ENCODE measurements at regions of chr12 and their contacts with region 1.

Region 1: GRCh38 chr12:6540181-6540877 is 6.0 kb downstream of the GAPDH start:
- DNase-seq: no peak
- ATAC-seq: peak; percentile 60
- H3K4me3 ChIP-seq: peak overlapping the region; percentile 28
- H3K27ac ChIP-seq: peak overlapping the region; percentile 42
- H3K4me1 ChIP-seq: peaks cover 26% of the 10 kb centered on the region
- H3K27me3 ChIP-seq: no peaks in the 10 kb centered on the region
- CTCF ChIP-seq: peak in 1 of 3 experiments; percentile 35; a peak in 1 of 6 replicates
- EP300 ChIP-seq: no peak
- POLR2A ChIP-seq: no peak
- RAD21 ChIP-seq: no peak

Region 2: GRCh38 chr12:5945071-5946008 is 595.0 kb before region 1 on chr12 and contains the start of gene ANO2:
- CTCF ChIA-PET with region 1: no interaction called
- POLR2A ChIA-PET with region 1: no interaction called
- RAD21 ChIA-PET with region 1: no interaction called
- SMC1A ChIA-PET with region 1: no interaction called
- in situ Hi-C with region 1: no loop called
- intact Hi-C with region 1: no loop called
- DNase-seq: no peak
- ATAC-seq: no peak
- H3K4me3 ChIP-seq: no peak within 1 kb of the TSS
- H3K27ac ChIP-seq: no peak within 1 kb of the TSS
- H3K4me1 ChIP-seq: no peaks in the 10 kb centered on the region
- H3K27me3 ChIP-seq: peaks cover 11 to 16% of the 10 kb centered on the region in 2 experiments
- CTCF ChIP-seq: no peak
- EP300 ChIP-seq: no peak
- POLR2A ChIP-seq: no peak
- RAD21 ChIP-seq: no peak
- polyA plus RNA-seq, gene ANO2: not detected

Region 3: DNA sequence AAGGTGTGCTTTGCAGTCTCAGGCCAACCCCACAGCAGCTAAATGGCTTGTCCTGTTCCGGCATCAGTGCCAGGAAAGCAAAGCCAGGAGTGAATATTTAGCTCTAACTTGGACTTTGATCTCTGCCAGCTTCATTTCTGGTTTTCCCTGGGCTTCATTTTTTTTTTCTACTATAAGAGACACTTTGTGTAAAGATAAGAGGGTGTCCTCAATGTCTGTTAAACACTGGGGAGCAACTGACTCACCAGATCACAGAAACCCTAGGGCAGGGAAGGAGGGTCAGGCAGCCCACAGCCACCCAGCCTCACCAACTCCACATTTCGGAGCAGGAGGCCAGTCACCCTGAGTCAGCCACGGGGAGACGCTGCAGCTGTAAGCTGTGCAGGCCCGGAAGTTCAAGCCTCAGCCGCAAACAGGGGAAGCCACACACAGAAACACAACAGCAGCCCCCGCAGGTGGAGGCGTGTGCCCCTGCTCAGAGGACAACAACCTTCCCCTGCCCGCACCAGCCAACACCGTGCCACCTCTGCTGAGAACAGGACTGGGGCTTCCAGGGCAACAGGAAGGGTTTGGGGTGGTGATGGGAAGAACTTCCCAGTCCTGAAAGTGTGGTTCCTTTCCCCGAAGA is 204.8 kb before region 1 on chr12:
- CTCF ChIA-PET with region 1: interaction called, 13 read pairs
- POLR2A ChIA-PET with region 1: interaction called, 4 read pairs
- RAD21 ChIA-PET with region 1: interaction called, 5 read pairs
- SMC1A ChIA-PET with region 1: interaction called, 4 read pairs
- in situ Hi-C with region 1: no loop called
- intact Hi-C with region 1: no loop called
- DNase-seq: peak; percentile 60
- ATAC-seq: peak; percentile 85
- H3K4me3 ChIP-seq: peak overlapping the region; percentile 53
- H3K27ac ChIP-seq: peak overlapping the region; percentile 93
- H3K4me1 ChIP-seq: peaks cover 45% of the 10 kb centered on the region
- H3K27me3 ChIP-seq: no peaks in the 10 kb centered on the region
- CTCF ChIP-seq: peak; percentile 71 to 92 (median 76)
- EP300 ChIP-seq: no peak; a peak in 1 of 4 replicates
- POLR2A ChIP-seq: peak; percentile 83
- RAD21 ChIP-seq: peak; percentile 75

Region 4: GRCh38 chr12:6461401-6462233 is 78.7 kb before region 1 on chr12:
- CTCF ChIA-PET with region 1: interaction called, 48 read pairs
- POLR2A ChIA-PET with region 1: interaction called, 5 read pairs
- RAD21 ChIA-PET with region 1: interaction called, 40 read pairs
- SMC1A ChIA-PET with region 1: interaction called, 50 read pairs
- in situ Hi-C with region 1: no loop called
- intact Hi-C with region 1: loop called (anchors 5 kb)
- DNase-seq: peak; percentile 95
- ATAC-seq: peak; percentile 92
- H3K4me3 ChIP-seq: peak overlapping the region; percentile 33; the same call in 1 of the 2 replicates
- H3K27ac ChIP-seq: peak overlapping the region; percentile 89
- H3K4me1 ChIP-seq: peaks cover 51% of the 10 kb centered on the region
- H3K27me3 ChIP-seq: no peaks in the 10 kb centered on the region
- CTCF ChIP-seq: no peak
- EP300 ChIP-seq: peak; percentile 63 to 88; a peak in 3 of 4 replicates
- POLR2A ChIP-seq: peak; percentile 72
- RAD21 ChIP-seq: no peak

Region 5: DNA sequence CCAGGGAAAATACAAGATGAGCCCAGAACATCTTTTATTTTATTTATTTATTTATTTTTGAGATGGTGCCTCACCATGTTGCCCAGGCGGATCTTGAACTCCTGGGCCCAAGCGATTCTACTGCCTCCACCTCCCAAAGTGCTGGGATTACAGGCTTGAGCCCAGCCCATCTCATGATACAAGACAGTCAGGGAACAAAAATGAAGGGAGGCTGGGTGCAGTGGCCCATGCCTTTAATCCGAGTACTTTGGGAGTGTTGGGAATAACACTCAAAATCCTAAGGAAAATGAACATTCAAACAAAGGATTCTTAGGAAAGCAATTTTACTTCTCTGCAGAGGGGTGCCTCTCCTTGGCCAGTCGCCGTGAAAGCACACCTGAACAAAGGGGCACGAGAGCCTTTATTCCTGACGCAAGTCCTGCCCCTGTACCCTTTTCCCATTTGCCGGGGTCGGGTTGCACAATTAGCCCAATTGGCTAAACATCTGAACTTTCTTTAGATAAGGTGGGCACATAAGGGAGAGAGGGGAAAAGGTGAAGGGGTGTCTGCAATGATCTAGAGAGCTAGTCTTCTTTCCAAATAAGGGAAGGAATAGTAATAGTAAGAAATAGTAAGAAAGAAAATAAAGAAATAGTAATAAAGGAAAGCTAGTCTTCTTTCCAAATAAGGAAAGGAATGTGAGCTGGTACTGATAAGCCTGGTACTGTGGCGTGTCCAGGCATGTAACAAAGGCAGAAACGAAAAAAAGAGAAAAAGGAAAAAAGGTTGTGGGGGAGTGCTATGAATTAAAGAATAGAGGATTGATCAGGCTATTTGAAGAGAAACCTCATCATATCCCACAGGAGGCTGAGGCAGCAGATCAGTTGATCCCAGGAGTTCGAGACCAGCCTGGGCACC is 33.0 kb before region 1 on chr12:
- CTCF ChIA-PET with region 1: interaction called, 10 read pairs
- POLR2A ChIA-PET with region 1: interaction called, 4 read pairs
- RAD21 ChIA-PET with region 1: no interaction called
- SMC1A ChIA-PET with region 1: interaction called, 5 read pairs
- in situ Hi-C with region 1: no loop called
- intact Hi-C with region 1: no loop called
- DNase-seq: no peak
- ATAC-seq: no peak
- H3K4me3 ChIP-seq: no peak overlapping the region
- H3K27ac ChIP-seq: no peak overlapping the region
- H3K4me1 ChIP-seq: no peaks in the 10 kb centered on the region
- H3K27me3 ChIP-seq: no peaks in the 10 kb centered on the region
- CTCF ChIP-seq: no peak
- EP300 ChIP-seq: no peak
- POLR2A ChIP-seq: no peak
- RAD21 ChIP-seq: no peak

Region 6: GRCh38 chr12:6554168-6555017 is 14.1 kb after region 1 on chr12:
- CTCF ChIA-PET with region 1: interaction called, 69 read pairs
- POLR2A ChIA-PET with region 1: interaction called, 32 read pairs
- RAD21 ChIA-PET with region 1: interaction called, 18 read pairs
- SMC1A ChIA-PET with region 1: interaction called, 14 read pairs
- in situ Hi-C with region 1: no loop called
- intact Hi-C with region 1: no loop called
- DNase-seq: no peak
- ATAC-seq: peak; percentile 83
- H3K4me3 ChIP-seq: peak overlapping the region; percentile 89
- H3K27ac ChIP-seq: peak overlapping the region; percentile 27
- H3K4me1 ChIP-seq: peaks cover 10% of the 10 kb centered on the region
- H3K27me3 ChIP-seq: no peaks in the 10 kb centered on the region
- CTCF ChIP-seq: peak; percentile 80 to 85 (median 84)
- EP300 ChIP-seq: no peak
- POLR2A ChIP-seq: no peak
- RAD21 ChIP-seq: peak; percentile 48